Activated CD4-positive, alpha-beta T cell treated with anti-CD3 and anti-CD28 coated beads, Interleukin-2, amount 10 ng/mL, durations not matched to agents 24 days and 14 days (primary cell): ENCODE measurements at regions of chr21 and their contacts with region 1.

Region 1: DNA sequence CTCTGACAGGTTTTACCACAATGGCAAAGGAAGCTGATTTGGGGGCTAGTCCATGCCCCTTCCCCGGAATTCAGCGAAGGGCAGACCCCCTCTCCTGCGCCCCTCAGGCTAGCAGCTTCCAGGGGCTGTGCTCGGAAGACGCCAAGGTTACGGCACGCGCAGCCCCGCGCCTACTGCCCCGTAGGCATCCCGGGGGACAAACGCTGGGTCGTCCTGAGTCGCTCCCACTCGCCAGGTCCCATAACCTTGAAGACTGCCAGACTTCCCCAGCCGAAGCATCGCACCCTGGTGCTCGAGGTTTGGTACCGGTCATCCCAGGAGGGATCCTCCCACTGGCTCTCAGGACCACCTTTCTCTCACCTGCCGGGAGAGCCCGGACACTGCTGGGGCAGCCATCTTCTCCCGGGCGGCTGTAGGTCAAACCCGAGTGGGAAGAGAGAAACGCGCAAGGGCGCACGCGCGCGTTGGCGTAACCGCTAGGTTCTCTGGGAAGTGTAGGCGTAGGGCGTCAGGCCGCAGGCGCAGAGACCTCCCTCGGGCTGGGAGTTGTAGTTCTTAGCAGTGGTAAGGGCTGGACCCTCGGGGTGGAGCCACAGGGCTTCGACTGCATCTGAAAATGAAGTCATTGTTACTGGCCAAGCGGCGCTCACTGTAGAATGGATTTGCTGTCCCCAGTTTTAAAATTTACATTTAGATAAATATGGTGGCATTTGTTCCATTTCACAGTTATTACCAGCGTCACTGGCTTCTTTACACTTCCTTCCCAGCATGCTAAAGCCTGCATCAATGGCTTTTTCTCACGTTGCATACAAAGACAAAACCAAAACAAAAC is at the start of gene ATP5PO:
- DNase-seq: peak; percentile 99
- H3K4me3 Mint-ChIP-seq: peak within 1 kb of the TSS; percentile 99
- H3K27ac Mint-ChIP-seq: peak within 1 kb of the TSS; percentile 99
- H3K4me1 Mint-ChIP-seq: peaks cover 30% of the 10 kb centered on the region
- H3K27me3 Mint-ChIP-seq: peaks cover 2% of the 10 kb centered on the region
- total RNA-seq, gene ATP5PO: 172 and 194 TPM in 2 replicates

Region 2: GRCh38 chr21:33931799-33932390 is 16.3 kb after region 1 on chr21:
- intact Hi-C with region 1: loop called (anchors 2 kb)
- DNase-seq: peak; percentile 80
- H3K4me3 Mint-ChIP-seq: peak overlapping the region; percentile 94
- H3K27ac Mint-ChIP-seq: peak overlapping the region; percentile 99
- H3K4me1 Mint-ChIP-seq: peaks cover 42% of the 10 kb centered on the region
- H3K27me3 Mint-ChIP-seq: no peaks in the 10 kb centered on the region

Region 3: DNA sequence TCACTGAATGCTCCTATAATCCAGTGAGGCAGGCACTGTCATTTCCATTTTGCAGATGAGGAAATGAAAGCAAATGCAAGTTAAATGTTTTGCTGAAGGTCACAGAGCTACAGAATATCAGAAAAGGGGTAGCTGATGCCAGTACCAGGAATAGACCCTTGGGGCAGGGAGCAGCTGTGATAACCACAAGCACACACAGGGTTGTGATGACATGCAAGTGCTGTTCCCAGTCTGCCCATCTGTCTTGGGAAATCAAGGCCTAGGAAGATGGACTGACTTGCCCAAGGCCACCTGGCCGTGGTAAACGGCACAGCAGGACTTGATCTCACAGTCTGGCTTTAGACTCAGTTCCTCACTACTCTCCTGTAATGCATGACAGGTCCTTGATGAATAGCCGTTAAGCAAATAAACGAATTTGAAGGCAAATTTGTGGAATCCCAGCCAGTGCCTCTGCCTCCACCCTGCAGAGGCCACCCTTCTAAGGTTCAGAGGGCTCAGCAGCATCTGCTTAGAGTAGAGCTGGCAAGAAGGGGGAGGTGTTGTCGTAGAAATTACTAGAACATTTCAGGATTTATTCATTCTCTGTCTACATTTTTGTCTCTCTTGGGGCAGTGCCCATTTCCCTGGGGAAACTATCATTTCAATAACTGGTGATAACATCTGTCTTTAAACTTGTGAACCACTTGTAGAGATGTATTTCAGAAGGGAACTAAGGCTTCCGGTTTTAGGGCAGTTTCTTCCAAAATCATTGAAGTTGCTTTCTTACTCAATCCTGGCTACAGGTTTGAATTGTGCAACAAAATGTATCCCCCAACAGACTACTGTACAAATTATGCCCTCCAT is 104.6 kb after region 1 on chr21:
- intact Hi-C with region 1: loop called (anchors 5 kb)
- DNase-seq: no peak
- H3K4me3 Mint-ChIP-seq: peak overlapping the region; percentile 41
- H3K27ac Mint-ChIP-seq: peak overlapping the region; percentile 34
- H3K4me1 Mint-ChIP-seq: peaks cover 30% of the 10 kb centered on the region
- H3K27me3 Mint-ChIP-seq: no peaks in the 10 kb centered on the region

Region 4: DNA sequence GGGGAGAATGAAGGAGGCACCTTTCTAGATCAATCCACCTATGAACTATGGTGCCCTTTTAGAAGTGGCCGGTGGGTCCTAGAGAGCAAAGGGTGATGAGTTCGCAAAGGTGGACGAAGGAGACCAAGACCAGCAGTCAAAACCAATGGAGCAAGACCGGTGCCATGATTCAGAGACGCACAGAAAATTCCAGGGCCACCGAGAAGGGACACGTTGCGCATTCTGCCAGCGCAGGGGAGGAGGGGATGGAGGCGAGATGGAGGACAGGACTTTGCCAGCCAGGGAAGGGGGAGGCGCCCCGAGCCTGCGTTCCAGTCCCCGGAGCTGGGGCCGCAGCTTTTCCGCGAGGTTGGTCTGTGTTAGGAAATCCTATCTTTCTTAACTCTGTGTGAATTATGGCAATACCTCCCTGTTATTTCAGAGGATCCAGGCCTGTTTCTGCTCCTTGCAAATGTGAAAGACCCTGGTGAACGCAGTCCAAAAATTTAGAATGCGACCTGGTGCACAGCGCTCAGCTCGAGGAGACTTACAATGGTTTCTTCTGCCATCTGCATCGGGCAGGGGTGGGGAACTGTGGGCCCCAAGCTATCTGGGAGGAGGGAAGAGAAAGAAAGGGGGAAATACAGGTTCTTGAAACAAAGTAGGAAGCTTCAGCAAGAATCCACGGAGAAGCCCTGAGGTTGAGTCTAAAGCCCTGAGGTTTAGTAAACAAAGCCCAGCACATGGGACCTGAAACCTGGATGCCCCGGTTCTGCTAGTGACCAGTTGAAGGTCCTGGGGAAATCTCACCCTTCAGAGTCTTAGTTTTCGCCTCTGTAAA is 287.2 kb after region 1 on chr21:
- intact Hi-C with region 1: loop called (anchors 5 kb)
- DNase-seq: no peak
- H3K4me3 Mint-ChIP-seq: peak overlapping the region; percentile 85
- H3K27ac Mint-ChIP-seq: peak overlapping the region; percentile 87
- H3K4me1 Mint-ChIP-seq: peaks cover 62% of the 10 kb centered on the region
- H3K27me3 Mint-ChIP-seq: no peaks in the 10 kb centered on the region

Region 5: DNA sequence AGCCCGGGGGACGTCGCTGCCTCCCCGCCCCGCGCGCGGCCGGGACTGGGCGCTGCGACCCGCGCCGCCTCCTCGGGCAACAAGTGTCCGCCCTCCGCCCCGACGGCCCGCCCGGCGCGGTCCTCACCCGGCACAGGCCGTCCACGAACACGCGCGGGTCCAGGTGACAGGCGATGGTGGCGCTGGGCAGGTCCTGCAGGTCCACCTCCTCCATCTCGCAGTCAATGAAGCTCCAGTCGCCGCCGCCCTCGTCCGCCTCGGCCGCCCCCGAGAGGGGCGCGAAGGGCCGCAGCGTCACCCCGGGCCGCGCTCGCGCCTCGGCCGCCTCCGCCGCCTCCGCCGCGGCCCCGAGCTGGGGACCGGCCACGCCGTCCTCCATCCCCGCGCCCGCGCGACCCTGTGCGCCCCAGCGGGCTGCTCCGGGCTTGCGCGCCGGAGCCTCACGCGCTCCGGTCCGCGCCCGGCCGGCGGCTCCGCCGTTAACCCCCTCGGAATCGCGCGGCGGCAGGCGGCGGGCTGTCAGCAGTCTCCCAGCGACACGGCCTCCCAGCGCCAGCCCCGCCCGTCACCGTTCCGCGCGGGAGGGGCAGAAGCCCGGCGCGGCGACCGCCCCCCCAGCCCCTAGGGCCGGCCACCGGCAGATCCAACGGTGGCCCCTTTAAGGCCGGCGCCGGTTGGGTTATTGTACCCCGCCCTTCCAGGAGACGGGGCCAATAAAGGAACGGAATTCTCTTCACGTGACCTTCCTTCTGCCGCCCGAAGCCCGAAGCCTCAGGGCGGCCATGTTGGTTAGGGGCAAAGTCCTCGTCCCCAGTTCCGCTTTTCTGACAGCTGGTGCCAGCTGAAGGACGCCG is 699.3 kb after region 1 on chr21 and contains the start of gene RCAN1:
- intact Hi-C with region 1: loop called (anchors 5 kb)
- DNase-seq: peak; percentile 96
- H3K4me3 Mint-ChIP-seq: peak within 1 kb of the TSS; percentile 91
- H3K27ac Mint-ChIP-seq: peak within 1 kb of the TSS; percentile 80
- H3K4me1 Mint-ChIP-seq: peaks cover 19% of the 10 kb centered on the region
- H3K27me3 Mint-ChIP-seq: peaks cover 23% of the 10 kb centered on the region
- total RNA-seq, gene RCAN1: 15.7 and 17.6 TPM in 2 replicates